Activated T-helper 1 cell treated with anti-CD3 and anti-CD28 coated beads, Interleukin-12 subunit alpha, Interleukin-12 subunit beta, Interleukin-2, Interleukin-4 antibody, amounts not matched to agents 30 ng/mL and 10 ng/mL and 1 ng/mL, durations not matched to agents 14 hours and 24 hours and 36 hours (primary cell): ENCODE measurements at regions of chr11 and their contacts with region 1.

Region 1: DNA sequence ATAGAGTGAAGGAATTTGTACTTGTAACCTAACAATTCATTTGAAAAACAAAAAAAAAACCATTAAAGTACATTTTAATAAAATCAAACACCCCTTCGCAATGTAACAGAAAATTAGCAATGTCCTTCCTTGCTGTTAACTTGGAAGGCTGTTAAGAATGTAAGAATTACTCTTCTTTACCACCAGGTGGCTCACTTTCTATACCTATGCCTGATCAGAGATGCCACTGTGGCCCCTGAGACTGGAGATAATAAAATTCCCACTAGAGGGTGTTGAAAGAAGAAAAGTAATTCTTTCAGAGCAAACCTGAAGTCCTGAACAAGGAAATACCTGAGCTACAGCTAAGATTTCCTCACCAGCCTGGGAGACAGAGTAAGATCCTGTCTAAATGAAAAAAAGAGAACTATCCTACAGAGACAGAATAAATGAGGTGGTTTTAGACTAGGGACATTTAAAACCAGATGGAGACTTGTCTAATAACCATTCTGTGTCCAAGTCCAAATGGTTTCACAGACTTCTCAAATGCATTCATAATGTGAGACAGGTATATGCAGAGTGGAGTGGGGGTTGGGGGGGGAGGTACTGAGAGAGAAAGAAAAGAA is 1089.3 kb downstream of the FAM181B start:
- DNase-seq: no peak
- H3K4me3 Mint-ChIP-seq: no peak overlapping the region
- H3K27ac Mint-ChIP-seq: no peak overlapping the region
- H3K4me1 Mint-ChIP-seq: peaks cover 4% of the 10 kb centered on the region
- H3K27me3 Mint-ChIP-seq: peaks cover 8% of the 10 kb centered on the region

Region 2: GRCh38 chr11:82038153-82038552 is 393.8 kb after region 1 on chr11:
- intact Hi-C with region 1: loop called (anchors 1 kb)
- DNase-seq: no peak
- H3K4me3 Mint-ChIP-seq: no peak overlapping the region
- H3K27ac Mint-ChIP-seq: no peak overlapping the region
- H3K4me1 Mint-ChIP-seq: no peaks in the 10 kb centered on the region
- H3K27me3 Mint-ChIP-seq: no peaks in the 10 kb centered on the region

Region 3: DNA sequence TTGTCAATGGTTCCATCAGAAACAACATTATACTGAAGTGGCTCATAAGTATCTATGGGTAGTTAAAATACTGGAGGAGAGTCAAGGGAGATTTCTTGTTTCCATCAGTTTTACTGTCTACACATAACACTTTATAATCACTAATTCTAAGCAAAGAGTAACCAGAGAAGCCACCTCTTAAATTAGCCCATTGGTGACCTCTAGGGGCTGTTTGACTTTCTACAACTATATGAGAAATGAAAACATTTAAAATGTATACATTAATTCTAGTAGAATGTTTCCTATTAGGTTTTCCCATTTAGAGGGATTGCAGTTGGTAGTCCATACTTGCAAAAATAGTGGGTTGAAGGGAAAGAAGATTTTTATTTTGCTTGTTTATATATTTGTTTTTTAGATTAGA is 585.0 kb after region 1 on chr11:
- intact Hi-C with region 1: loop called (anchors 1 kb)
- DNase-seq: no peak
- H3K4me3 Mint-ChIP-seq: no peak overlapping the region
- H3K27ac Mint-ChIP-seq: no peak overlapping the region
- H3K4me1 Mint-ChIP-seq: no peaks in the 10 kb centered on the region
- H3K27me3 Mint-ChIP-seq: no peaks in the 10 kb centered on the region

Region 4: GRCh38 chr11:82701847-82702520 is 1057.6 kb after region 1 on chr11:
- intact Hi-C with region 1: loop called (anchors 1 kb)
- DNase-seq: no peak
- H3K4me3 Mint-ChIP-seq: no peak overlapping the region
- H3K27ac Mint-ChIP-seq: no peak overlapping the region
- H3K4me1 Mint-ChIP-seq: no peaks in the 10 kb centered on the region
- H3K27me3 Mint-ChIP-seq: peaks cover 17% of the 10 kb centered on the region